CD4-positive, alpha-beta T cell (primary cell): ENCODE measurements at regions of chr5 and their contacts with region 1.

Region 1: DNA sequence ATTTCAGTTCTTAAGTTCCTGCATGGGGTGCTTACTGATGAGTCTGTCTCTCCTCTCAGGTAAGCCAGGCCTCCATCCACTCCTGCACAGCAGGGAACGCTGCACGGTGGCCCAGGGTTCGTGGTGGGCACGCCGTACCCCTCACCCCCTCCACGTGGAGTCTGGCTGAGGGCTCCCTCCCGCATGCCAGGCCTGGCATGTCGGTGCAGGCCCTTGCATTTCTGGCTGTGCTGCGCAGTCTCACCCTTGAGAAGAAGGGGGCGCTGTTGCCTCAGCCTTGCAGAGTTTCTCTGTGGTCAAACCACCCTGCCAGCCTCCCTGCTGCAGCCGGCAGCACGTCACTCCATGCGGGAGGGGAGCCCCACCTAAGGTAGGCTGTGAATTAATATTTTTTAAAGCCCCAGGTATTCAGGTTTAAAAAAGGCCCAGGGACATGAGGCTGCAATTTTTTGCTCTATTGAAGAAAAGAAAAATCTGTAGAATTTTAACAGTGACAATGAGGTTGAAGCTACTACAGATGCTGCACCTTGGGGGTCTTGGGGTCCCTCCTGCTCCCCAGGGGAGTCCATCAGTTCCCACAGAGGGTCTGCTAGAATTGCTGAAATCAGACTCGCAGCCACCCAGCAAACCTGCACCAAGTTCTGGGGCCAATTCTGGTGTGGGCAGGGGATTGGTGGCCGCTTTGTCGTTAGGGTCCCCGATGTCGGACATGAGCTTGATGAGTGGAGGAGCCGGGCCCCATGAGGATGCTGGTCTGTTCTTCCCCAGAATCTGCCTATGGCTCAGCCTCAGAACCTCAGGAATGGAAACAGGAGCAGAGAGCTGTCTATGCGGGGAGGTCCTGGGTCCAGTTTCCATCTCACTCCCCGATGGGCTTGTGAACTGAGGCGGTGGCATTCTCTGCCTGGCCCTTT is 52.6 kb downstream of the TENT4A start:
- DNase-seq: peak; percentile 41 to 79 (median 51)
- ATAC-seq: peak; percentile 83
- H3K4me3 ChIP-seq: no peak overlapping the region
- H3K4me3 Mint-ChIP-seq: no peak overlapping the region
- H3K27ac ChIP-seq: no peak overlapping the region
- H3K27ac Mint-ChIP-seq: no peak overlapping the region
- H3K4me1 ChIP-seq: peaks cover 14% of the 10 kb centered on the region
- H3K4me1 Mint-ChIP-seq: no peaks in the 10 kb centered on the region
- H3K27me3 ChIP-seq: no peaks in the 10 kb centered on the region
- H3K27me3 Mint-ChIP-seq: no peaks in the 10 kb centered on the region
- CTCF ChIP-seq: peak; percentile 59

Region 2: GRCh38 chr5:6961837-6962635 is 196.2 kb after region 1 on chr5:
- CTCF ChIA-PET with region 1: no interaction called
- POLR2A ChIA-PET with region 1: no interaction called
- intact Hi-C with region 1: no loop called
- DNase-seq: no peak
- ATAC-seq: no peak
- H3K4me3 ChIP-seq: no peak overlapping the region
- H3K4me3 Mint-ChIP-seq: no peak overlapping the region
- H3K27ac ChIP-seq: no peak overlapping the region
- H3K27ac Mint-ChIP-seq: no peak overlapping the region
- H3K4me1 ChIP-seq: no peaks in the 10 kb centered on the region
- H3K4me1 Mint-ChIP-seq: no peaks in the 10 kb centered on the region
- H3K27me3 ChIP-seq: no peaks in the 10 kb centered on the region
- H3K27me3 Mint-ChIP-seq: peaks cover 6% of the 10 kb centered on the region
- CTCF ChIP-seq: no peak

Region 3: GRCh38 chr5:7745882-7746610 is 980.2 kb after region 1 on chr5:
- CTCF ChIA-PET with region 1: no interaction called
- POLR2A ChIA-PET with region 1: no interaction called
- intact Hi-C with region 1: loop called in 1 of 2 experiments (anchors 5 kb)
- DNase-seq: peak in 10 of 14 experiments; percentile 7 to 56 (median 20)
- ATAC-seq: no peak
- H3K4me3 ChIP-seq: no peak overlapping the region
- H3K4me3 Mint-ChIP-seq: no peak overlapping the region
- H3K27ac ChIP-seq: no peak overlapping the region
- H3K27ac Mint-ChIP-seq: no peak overlapping the region
- H3K4me1 ChIP-seq: no peaks in the 10 kb centered on the region
- H3K4me1 Mint-ChIP-seq: no peaks in the 10 kb centered on the region
- H3K27me3 ChIP-seq: no peaks in the 10 kb centered on the region
- H3K27me3 Mint-ChIP-seq: peaks cover 7% of the 10 kb centered on the region
- CTCF ChIP-seq: peak; percentile 56

Region 4: GRCh38 chr5:7815892-7816534 is 1050.1 kb after region 1 on chr5:
- CTCF ChIA-PET with region 1: no interaction called
- POLR2A ChIA-PET with region 1: no interaction called
- intact Hi-C with region 1: loop called in 1 of 2 experiments (anchors 5 kb)
- DNase-seq: peak; percentile 32 to 69 (median 48)
- ATAC-seq: peak; percentile 34
- H3K4me3 ChIP-seq: no peak overlapping the region
- H3K4me3 Mint-ChIP-seq: no peak overlapping the region
- H3K27ac ChIP-seq: no peak overlapping the region
- H3K27ac Mint-ChIP-seq: no peak overlapping the region
- H3K4me1 ChIP-seq: peaks cover 5% of the 10 kb centered on the region
- H3K4me1 Mint-ChIP-seq: no peaks in the 10 kb centered on the region
- H3K27me3 ChIP-seq: peaks cover 9 to 23% of the 10 kb centered on the region in 2 experiments
- H3K27me3 Mint-ChIP-seq: peaks cover 68% of the 10 kb centered on the region
- CTCF ChIP-seq: peak; percentile 72

Region 5: DNA sequence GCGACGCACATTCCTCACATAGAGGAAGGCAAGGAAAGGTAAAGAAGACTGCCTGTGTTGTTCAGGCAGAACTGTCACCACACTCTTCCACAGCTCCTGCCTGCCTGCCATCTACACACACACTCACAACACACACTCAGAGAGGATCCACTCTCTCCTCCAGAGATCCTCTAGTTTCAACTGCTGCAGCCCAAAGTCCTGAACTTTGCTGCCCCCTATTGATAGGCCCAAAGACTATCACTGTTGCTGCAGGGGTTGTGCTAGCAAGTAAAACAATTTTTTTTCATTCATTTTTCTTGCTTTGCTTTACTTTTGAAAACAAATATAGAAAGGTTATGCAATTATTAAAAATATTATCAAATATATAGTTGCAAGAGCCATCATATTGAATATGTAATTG is 1091.0 kb after region 1 on chr5:
- CTCF ChIA-PET with region 1: no interaction called
- POLR2A ChIA-PET with region 1: no interaction called
- intact Hi-C with region 1: loop called in 1 of 2 experiments (anchors 10 kb)
- DNase-seq: peak in 5 of 14 experiments; percentile 20 to 60 (median 55)
- ATAC-seq: peak; percentile 67
- H3K4me3 ChIP-seq: no peak overlapping the region
- H3K4me3 Mint-ChIP-seq: no peak overlapping the region
- H3K27ac ChIP-seq: no peak overlapping the region
- H3K27ac Mint-ChIP-seq: no peak overlapping the region
- H3K4me1 ChIP-seq: peaks cover 19% of the 10 kb centered on the region
- H3K4me1 Mint-ChIP-seq: peaks cover 30% of the 10 kb centered on the region
- H3K27me3 ChIP-seq: no peaks in the 10 kb centered on the region
- H3K27me3 Mint-ChIP-seq: no peaks in the 10 kb centered on the region
- CTCF ChIP-seq: peak; percentile 70

Region 6: GRCh38 chr5:8254674-8255073 is 1488.8 kb after region 1 on chr5:
- CTCF ChIA-PET with region 1: no interaction called
- POLR2A ChIA-PET with region 1: no interaction called
- intact Hi-C with region 1: no loop called
- DNase-seq: no peak
- ATAC-seq: no peak
- H3K4me3 ChIP-seq: no peak overlapping the region
- H3K4me3 Mint-ChIP-seq: no peak overlapping the region
- H3K27ac ChIP-seq: no peak overlapping the region
- H3K27ac Mint-ChIP-seq: no peak overlapping the region
- H3K4me1 ChIP-seq: no peaks in the 10 kb centered on the region
- H3K4me1 Mint-ChIP-seq: no peaks in the 10 kb centered on the region
- H3K27me3 ChIP-seq: no peaks in the 10 kb centered on the region
- H3K27me3 Mint-ChIP-seq: no peaks in the 10 kb centered on the region
- CTCF ChIP-seq: no peak